MCF 10A (cell line): ENCODE measurements at regions of chr14 and their contacts with region 1.

Region 1: DNA sequence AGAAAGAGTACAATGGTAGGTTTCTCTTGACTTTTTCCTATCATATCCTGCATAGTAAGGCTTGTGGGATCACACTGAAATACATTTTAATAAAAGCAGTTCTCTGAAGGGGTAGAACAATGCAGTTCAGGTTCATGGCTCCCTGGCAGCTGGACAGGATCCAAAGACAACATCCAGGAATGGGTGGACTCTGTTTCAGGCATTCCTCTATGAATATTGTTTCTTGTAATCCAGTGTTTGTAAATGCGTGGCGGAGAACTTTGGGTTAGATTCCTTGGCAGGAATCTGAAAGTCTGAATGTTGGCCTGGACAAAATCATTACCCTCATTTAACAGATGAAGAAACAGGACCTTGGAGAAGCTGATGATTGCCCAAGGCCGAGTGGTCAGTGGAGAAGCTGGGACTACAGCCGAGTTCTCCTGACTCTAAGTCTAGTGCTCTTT is 43.5 kb downstream of the SYNE2 start:
- DNase-seq: peak; percentile 96
- H3K4me3 Mint-ChIP-seq: no peak overlapping the region
- H3K27ac Mint-ChIP-seq: peak overlapping the region; percentile 47
- H3K4me1 Mint-ChIP-seq: peaks cover 43% of the 10 kb centered on the region
- H3K27me3 Mint-ChIP-seq: no peaks in the 10 kb centered on the region
- CTCF ChIP-seq: no peak

Region 2: GRCh38 chr14:63863004-63863403 is 33.3 kb before region 1 on chr14:
- CTCF ChIA-PET with region 1: interaction called, 3 read pairs
- POLR2A ChIA-PET with region 1: interaction called, 22 read pairs
- intact Hi-C with region 1: no loop called
- DNase-seq: no peak
- H3K4me3 Mint-ChIP-seq: no peak overlapping the region
- H3K27ac Mint-ChIP-seq: peak overlapping the region; percentile 40
- H3K4me1 Mint-ChIP-seq: peaks cover 12% of the 10 kb centered on the region
- H3K27me3 Mint-ChIP-seq: no peaks in the 10 kb centered on the region
- CTCF ChIP-seq: no peak

Region 3: DNA sequence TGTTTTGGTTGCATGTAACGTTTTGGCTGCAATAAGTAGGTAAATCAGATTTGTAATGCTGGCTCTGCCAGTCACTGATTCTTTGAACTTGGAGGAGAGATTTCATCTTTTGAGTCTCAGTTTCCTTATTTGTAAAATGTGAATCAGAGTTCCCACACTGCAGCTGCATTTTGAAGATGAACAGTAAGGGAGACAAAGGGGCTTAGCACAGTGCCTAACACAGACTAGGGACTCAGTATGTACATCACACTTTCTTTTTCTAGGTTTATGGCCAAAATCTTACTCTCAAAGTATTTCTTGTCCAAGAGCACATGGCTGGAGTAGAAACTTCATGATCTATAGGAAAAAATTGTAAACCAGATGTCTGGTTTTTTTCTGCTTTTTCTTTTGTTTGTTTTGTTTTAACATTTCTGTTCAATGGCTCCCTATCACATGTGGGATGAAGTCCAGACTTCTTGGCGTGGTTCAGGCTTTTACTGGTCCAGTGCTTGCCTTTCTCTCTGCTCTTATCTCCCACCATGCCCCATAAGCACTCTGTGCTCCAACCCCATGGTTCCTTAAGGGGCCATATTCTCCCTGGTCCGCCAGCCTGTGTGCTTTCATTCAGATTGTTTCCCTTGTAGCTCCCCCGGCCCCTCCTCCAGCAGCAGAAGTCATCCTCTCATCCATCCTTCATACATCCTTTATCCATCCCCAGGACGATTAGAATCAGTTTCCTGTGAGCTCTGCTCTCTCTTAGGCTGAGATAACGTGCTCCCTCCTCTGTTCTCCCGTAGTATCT is 14.5 kb after region 1 on chr14:
- CTCF ChIA-PET with region 1: interaction called, 3 read pairs
- POLR2A ChIA-PET with region 1: interaction called, 12 read pairs
- intact Hi-C with region 1: no loop called
- DNase-seq: no peak
- H3K4me3 Mint-ChIP-seq: no peak overlapping the region
- H3K27ac Mint-ChIP-seq: no peak overlapping the region
- H3K4me1 Mint-ChIP-seq: peaks cover 17% of the 10 kb centered on the region
- H3K27me3 Mint-ChIP-seq: no peaks in the 10 kb centered on the region
- CTCF ChIP-seq: no peak